Activated CD4-positive, alpha-beta memory T cell treated with anti-CD3 and anti-CD28 coated beads, Interleukin-2, amount 10 ng/mL, durations not matched to agents 7 days and 5 days (primary cell): ENCODE measurements at regions of chr5 and their contacts with region 1.

Region 1: GRCh38 chr5:132820162-132820754 is 7.2 kb downstream of the SOWAHA start:
- DNase-seq: peak; percentile 92
- H3K4me3 Mint-ChIP-seq: no peak overlapping the region
- H3K27ac Mint-ChIP-seq: no peak overlapping the region
- H3K4me1 Mint-ChIP-seq: peaks cover 14% of the 10 kb centered on the region
- H3K27me3 Mint-ChIP-seq: peaks cover 39% of the 10 kb centered on the region

Region 2: GRCh38 chr5:132506094-132506692 is 314.1 kb before region 1 on chr5:
- CTCF ChIA-PET with region 1: interaction called, 20 read pairs
- POLR2A ChIA-PET with region 1: no interaction called
- DNase-seq: no peak
- H3K4me3 Mint-ChIP-seq: no peak overlapping the region
- H3K27ac Mint-ChIP-seq: no peak overlapping the region
- H3K4me1 Mint-ChIP-seq: peaks cover 8% of the 10 kb centered on the region
- H3K27me3 Mint-ChIP-seq: peaks cover 19% of the 10 kb centered on the region

Region 3: GRCh38 chr5:132591145-132591544 is 229.1 kb before region 1 on chr5:
- CTCF ChIA-PET with region 1: interaction called, 16 read pairs
- POLR2A ChIA-PET with region 1: no interaction called
- DNase-seq: no peak
- H3K4me3 Mint-ChIP-seq: no peak overlapping the region
- H3K27ac Mint-ChIP-seq: no peak overlapping the region
- H3K4me1 Mint-ChIP-seq: peaks cover 4% of the 10 kb centered on the region
- H3K27me3 Mint-ChIP-seq: no peaks in the 10 kb centered on the region

Region 4: GRCh38 chr5:132802044-132802684 is 18.1 kb before region 1 on chr5:
- CTCF ChIA-PET with region 1: interaction called, 16 read pairs
- POLR2A ChIA-PET with region 1: no interaction called
- DNase-seq: no peak
- H3K4me3 Mint-ChIP-seq: no peak overlapping the region
- H3K27ac Mint-ChIP-seq: no peak overlapping the region
- H3K4me1 Mint-ChIP-seq: peaks cover 2% of the 10 kb centered on the region
- H3K27me3 Mint-ChIP-seq: peaks cover 33% of the 10 kb centered on the region

Region 5: DNA sequence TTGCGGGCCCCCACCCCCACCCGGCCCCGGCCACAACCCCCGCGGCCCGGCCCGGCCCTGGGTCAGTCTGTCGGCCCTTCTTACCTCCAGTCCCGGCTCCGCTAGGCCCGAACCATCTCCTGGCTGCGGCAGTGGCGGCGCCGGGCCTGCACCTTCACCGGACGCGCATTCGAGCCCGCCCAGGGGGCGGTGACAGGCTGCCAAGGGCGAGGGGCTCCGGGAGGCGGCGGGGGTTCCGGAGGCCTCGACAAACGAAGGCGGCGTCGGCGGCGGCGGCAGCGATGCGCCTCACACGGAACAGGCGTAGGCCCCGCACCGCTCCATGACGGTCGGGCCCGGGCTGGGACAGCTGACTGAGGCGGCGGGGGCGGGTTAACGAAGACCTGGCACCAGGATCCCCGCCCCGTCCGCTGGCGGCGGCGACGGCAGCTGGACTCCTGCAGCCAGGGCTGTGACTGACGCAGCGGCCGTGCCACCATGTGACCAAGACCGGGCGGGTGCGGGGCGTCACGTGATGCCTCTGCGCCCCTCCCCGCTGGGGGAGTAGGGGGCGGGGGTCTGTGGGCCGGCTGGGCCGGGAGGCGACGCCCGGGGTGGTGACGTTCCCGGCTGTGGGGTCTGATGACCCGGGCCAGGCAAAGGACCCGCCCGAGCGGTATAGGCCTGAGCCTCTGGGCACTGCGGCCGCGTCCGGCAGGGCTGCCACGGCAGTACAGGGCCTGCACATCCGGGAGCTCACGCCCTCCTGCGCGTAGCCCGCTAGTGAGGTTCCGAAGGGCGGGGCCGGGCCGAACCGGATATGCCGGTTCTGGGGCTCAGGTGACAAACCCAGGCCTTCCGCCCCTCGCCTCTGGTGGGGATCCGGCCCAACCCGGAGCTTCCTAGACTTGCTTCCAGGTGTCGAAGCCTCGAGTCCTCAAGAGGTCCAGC is 143.2 kb after region 1 on chr5 and contains the start of gene AFF4:
- CTCF ChIA-PET with region 1: no interaction called
- POLR2A ChIA-PET with region 1: no interaction called
- DNase-seq: peak; percentile 90
- H3K4me3 Mint-ChIP-seq: peak within 1 kb of the TSS; percentile 98
- H3K27ac Mint-ChIP-seq: peak within 1 kb of the TSS; percentile 94
- H3K4me1 Mint-ChIP-seq: peaks cover 27% of the 10 kb centered on the region
- H3K27me3 Mint-ChIP-seq: no peaks in the 10 kb centered on the region
- total RNA-seq, gene AFF4: 33.1 to 33.3 TPM